ENCODE measurements at regions of chr22 and their contacts with region 1.

Region 1: DNA sequence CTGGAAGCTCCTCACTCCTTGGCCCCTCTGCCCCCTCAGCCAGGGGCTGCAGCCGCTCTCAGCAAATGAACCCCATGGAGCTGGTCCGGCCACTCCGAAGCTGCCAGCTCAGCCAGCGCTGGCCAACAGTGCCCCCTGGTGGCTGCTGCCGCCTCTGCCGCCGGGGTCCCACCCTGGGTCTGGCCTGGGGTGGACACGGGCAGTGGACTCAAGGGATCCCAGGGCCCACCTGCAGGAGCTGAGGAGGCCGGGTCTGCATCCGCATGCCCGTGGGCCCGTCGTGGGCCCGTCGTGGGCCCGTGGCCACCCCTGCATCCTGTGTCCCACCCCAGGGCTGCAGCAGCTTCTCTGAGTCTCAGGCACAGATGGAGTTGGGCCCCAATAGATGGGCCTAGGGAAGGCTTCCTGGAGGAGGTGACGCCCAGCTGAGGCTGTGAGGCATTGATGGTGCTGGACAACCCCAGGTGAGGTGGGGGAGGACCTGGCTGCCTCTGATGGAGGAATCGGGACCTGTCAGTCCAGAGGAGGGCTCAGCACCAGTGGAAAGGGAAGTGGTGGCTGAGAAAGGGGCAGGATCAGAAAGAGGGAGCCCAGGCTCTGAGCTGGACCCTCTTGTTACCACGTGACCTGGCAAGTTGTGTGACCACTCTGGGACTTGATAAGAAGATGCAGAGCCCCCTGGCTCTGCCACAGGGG is 522.3 kb downstream of the BRD1 start:
- DNase-seq: peak; percentile 39 to 98 (median 78)
- ATAC-seq: peak; percentile 80 to 98 (median 92)
- H3K4me3 ChIP-seq: no peak overlapping the region
- H3K27ac ChIP-seq: no peak overlapping the region
- H3K4me1 ChIP-seq: no peaks in the 10 kb centered on the region
- H3K27me3 ChIP-seq: peaks cover 0 to 3% (median 1%) of the 10 kb centered on the region in 4 donors
- CTCF ChIP-seq: peak; percentile 91 to 98 (median 96)

Region 2: GRCh38 chr22:48574776-48575565 is 730.4 kb before region 1 on chr22:
- intact Hi-C with region 1: loop called in 1 of 3 experiments (anchors 5 kb)
- DNase-seq: peak; percentile 58 to 79 (median 67)
- ATAC-seq: peak; percentile 83 to 94 (median 88)
- H3K4me3 ChIP-seq: peak overlapping the region in 1 of 4 donors; percentile 29
- H3K27ac ChIP-seq: no peak overlapping the region
- H3K4me1 ChIP-seq: no peaks in the 10 kb centered on the region
- H3K27me3 ChIP-seq: peaks cover 0 to 6% (median 0%) of the 10 kb centered on the region in 4 donors
- CTCF ChIP-seq: peak in 3 of 4 donors; percentile 20 to 41 (median 27)

Region 3: GRCh38 chr22:49046546-49047361 is 258.6 kb before region 1 on chr22:
- intact Hi-C with region 1: loop called (anchors 5 to 10 kb)
- DNase-seq: peak in 5 of 6 donors; percentile 50 to 81 (median 57)
- ATAC-seq: peak; percentile 63 to 97 (median 87)
- H3K4me3 ChIP-seq: no peak overlapping the region
- H3K27ac ChIP-seq: no peak overlapping the region
- H3K4me1 ChIP-seq: no peaks in the 10 kb centered on the region
- H3K27me3 ChIP-seq: no peaks in the 10 kb centered on the region
- CTCF ChIP-seq: peak in 3 of 4 donors; percentile 33 to 48 (median 43)

Region 4: GRCh38 chr22:49735411-49735900 is 430.1 kb after region 1 on chr22:
- intact Hi-C with region 1: no loop called
- DNase-seq: peak in 2 of 6 donors; percentile 36 to 50
- ATAC-seq: peak in 1 of 4 donors; percentile 36
- H3K4me3 ChIP-seq: no peak overlapping the region
- H3K27ac ChIP-seq: no peak overlapping the region
- H3K4me1 ChIP-seq: no peaks in the 10 kb centered on the region
- H3K27me3 ChIP-seq: peaks cover 0 to 4% (median 0%) of the 10 kb centered on the region in 4 donors
- CTCF ChIP-seq: no peak

Measured in pancreas (tissue), 10 donors.